ENCODE measurements at regions of chr16 and their contacts with region 1.

Region 1: DNA sequence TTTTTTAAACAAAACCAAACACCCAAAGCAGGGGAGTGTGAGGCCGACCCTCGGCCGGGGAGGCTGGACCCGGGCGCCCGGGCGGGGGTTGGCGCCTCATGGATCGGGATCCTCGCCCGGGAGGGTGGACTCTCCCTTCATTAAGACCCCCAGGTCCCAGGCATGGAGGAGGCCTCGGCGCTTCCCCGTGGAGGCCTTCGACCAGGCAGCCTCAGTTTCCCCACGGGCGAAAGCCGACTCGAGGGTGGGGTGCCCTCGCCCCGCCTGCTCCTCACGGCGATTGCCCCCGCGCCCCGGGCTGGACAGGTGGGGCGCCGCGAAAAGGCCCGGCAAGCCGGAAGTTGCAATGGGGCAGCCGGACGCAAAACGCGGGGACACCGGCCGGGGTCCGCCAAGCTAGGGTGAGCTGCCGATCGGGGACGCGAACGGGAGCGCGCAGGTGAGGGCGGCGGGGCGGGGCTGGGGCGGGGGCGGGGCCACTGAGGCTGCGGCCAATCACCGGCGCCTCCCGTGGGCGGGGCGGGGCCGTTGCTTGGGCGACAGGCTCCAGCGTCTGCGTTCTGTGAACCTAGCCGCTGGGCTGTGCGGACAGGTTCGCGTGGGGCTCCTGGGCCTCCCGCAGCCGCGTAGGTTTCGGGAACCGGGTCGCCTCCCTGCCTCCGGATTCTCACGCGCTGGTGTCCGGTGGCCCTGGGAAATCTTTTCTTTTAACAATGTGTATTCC is 6.0 kb upstream of the ZNF205 start:
- DNase-seq: peak; percentile 96
- H3K4me3 ChIP-seq: peak overlapping the region; percentile 46 to 69 (median 58)
- H3K27ac ChIP-seq: peak overlapping the region; percentile 71 to 80 (median 76)
- H3K4me1 ChIP-seq: peaks cover 0 to 15% (median 8%) of the 10 kb centered on the region in 4 donors
- H3K27me3 ChIP-seq: peaks cover 0 to 10% (median under 1%) of the 10 kb centered on the region in 3 donors
- CTCF ChIP-seq: no peak
- EP300 ChIP-seq: no peak
- POLR2A ChIP-seq: no peak

Region 2: DNA sequence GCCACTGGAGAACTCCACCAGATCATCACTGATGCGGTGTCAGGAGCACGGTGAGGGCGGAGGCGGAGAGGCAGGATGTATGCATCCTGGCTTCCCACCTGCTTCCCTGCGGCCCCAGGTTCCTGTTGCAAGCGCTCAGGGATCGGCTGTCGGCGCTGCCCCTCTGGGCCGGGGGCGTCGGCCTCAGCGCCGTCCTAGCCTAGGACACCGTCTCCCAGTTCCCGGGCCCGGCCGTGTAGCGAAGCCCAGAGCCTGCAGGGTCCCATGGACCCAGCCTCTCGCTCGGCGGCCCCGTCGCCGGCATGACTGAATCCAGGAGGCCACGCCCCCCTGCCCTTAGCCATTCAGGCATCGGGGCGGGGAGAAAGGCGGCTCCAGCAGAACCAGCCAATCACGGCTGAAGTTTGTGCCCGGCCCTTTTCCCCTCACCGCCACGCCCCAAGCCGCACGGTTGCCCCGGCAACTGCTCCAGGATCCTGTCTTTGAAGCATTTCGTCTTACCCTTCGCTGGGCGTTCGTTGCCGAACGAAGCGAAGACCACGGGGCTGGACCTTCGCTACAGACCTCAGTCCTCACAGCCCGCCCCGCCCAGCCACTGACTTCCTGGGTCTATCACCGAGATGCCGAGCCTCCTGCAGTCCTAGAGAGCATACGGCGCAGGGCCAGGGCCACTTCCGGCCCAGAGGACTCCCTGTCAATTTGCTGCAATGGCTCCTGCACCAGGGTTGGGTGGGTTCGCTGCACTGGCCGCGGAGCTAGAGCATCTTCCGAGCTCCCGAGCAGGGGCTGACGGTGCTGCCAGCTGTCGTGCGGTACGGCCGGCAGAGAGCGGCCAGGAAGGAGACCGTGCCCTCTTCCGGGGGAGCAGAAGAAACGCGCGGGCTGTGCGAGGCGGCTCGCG is 17.9 kb after region 1 on chr16:
- intact Hi-C with region 1: loop called (anchors 2 kb)
- DNase-seq: peak; percentile 98
- H3K4me3 ChIP-seq: peak overlapping the region; percentile 61 to 79 (median 69)
- H3K27ac ChIP-seq: peak overlapping the region; percentile 78 to 83 (median 78)
- H3K4me1 ChIP-seq: peaks cover 0 to 25% (median 21%) of the 10 kb centered on the region in 4 donors
- H3K27me3 ChIP-seq: no peaks in the 10 kb centered on the region
- CTCF ChIP-seq: peak in 1 of 4 experiments; percentile 31
- EP300 ChIP-seq: no peak
- POLR2A ChIP-seq: no peak

Region 3: DNA sequence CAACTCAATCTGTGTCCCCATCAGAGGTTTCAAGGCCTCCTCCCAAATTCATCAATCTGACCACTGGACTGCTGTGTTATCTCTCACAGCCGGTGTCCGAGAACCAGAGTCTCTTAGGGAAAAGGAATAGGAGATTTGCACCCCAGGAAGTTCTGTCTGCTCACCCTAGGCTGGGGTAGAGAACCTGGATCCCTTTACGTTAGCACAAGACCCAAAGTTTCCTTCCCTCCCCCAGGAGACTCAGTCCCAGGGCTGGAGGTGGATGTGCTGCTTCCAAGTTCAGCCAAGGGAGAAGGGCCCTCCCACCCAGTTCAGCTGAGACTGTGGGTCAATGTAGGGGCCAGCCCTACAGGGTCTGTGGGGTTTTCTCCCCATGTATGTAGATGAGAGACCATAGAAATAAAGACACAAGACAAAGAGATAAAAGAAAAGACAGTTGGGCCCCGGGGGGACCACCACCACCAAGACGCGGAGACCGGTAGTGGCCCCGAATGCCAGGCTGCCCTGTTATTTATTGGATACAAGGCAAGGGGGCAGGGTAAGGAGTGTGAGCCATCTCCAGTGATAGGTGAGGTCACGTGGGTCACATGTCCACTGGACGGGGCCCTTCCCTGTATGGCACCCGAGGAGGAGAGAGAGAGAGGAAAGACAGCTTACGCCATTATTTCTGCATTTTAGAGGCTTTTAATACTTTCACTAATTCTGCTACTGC is 58.9 kb after region 1 on chr16:
- intact Hi-C with region 1: loop called (anchors 5 kb)
- DNase-seq: no peak
- H3K4me3 ChIP-seq: peak overlapping the region in 3 of 4 donors; percentile 19 to 33 (median 27)
- H3K27ac ChIP-seq: peak overlapping the region in 1 of 4 donors; percentile 42
- H3K4me1 ChIP-seq: peaks cover 0 to 9% (median 4%) of the 10 kb centered on the region in 4 donors
- H3K27me3 ChIP-seq: peaks cover 14 to 56% (median 15%) of the 10 kb centered on the region in 3 donors
- CTCF ChIP-seq: no peak
- EP300 ChIP-seq: no peak
- POLR2A ChIP-seq: no peak

Region 4: GRCh38 chr16:3413730-3414379 is 307.5 kb after region 1 on chr16:
- intact Hi-C with region 1: no loop called
- DNase-seq: no peak
- H3K4me3 ChIP-seq: no peak overlapping the region
- H3K27ac ChIP-seq: no peak overlapping the region
- H3K4me1 ChIP-seq: no peaks in the 10 kb centered on the region
- H3K27me3 ChIP-seq: no peaks in the 10 kb centered on the region
- CTCF ChIP-seq: no peak
- EP300 ChIP-seq: no peak
- POLR2A ChIP-seq: no peak

Measured in sigmoid colon (tissue), 7 donors.